ENCODE measurements at regions of chr17 and their contacts with region 1.

Region 1: DNA sequence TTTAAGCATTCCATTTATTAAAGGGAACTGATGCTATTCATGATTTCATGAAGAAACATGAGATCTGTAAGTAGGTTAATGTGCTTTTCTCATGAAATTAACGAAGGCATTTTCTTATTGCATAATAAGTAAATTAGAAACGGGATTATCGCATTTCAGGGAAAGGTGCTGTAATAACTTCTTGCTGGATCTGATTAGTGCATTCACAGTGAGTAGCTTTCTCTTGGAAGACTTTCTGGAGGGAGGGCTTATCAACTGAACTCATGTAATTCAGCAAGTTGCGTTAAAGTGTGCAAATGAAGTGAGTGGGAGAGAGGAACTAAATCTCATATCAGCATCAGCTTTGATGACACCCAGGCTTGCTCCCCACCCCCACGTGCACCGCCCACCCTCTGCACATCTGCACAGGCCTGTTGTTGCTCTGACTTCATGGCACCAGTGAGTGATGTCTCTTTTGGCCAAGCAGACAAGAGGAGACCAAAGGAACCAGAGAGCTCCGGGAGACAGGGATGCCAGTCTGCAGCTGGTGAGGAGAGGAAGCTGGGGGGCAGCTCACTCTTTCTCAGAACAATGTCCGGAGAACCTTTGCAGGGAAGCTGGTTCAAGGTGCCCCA is 26.3 kb upstream of the GAS7 start:
- DNase-seq: no peak
- ATAC-seq: no peak

Region 2: GRCh38 chr17:9959377-9959981 is 265.2 kb before region 1 on chr17:
- intact Hi-C with region 1: loop called (anchors 2 kb)
- DNase-seq: peak; percentile 62
- ATAC-seq: peak; percentile 32

Region 3: DNA sequence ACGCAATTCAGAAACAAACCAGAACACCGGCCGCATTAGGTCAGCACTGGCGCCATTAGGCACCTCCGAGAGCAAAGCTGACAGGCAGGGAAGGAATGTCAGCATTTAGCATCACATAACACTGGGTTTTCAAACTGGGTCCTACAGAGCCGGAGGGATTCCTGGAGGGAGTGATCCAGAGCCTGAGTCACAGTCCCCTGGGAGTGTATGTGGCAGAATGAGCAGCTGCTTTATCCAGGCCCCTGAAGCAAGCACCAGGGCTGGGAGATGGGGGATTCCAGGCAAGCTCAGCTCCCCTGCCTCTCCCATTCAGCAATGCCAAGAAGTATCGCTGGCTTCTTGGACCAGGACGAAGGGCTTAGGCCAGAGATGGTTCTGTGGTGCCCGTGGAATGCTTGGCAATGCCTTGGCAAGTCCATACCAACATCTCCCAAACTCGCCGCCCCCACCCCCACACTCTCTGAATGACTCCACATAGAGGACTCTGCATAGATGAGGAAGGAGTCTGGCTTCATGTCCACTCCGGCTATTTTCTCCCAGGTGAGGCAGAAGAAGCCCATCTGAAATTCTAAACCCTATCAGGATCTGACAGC is 46.7 kb before region 1 on chr17:
- intact Hi-C with region 1: no loop called
- DNase-seq: no peak
- ATAC-seq: peak; percentile 14

Measured in Right ventricle myocardium superior (tissue), 1 donor.